A673 (cell line): ENCODE measurements at regions of chr3 and their contacts with region 1.

Region 1: DNA sequence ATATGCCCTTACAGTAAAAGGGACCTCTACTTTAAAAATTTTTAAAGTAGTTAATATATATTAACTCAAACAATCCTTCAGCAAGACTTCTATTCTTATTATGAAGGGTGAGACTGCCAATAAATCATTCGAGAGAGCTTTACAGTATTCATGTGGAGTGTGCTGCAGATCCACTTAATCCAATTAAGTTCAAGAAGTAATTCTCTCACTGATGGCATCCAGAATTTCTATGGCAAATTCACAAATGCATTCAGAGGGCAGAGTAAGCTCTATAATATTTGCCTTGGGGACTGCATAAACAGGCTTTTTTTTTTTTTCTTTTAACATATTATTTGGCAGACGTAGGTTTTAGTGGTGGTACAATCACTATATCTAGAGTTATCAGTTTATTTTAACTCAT is 692.0 kb downstream of the NLGN1 start:
- DNase-seq: peak; percentile 90
- H3K4me3 ChIP-seq: no peak overlapping the region
- H3K27ac ChIP-seq: no peak overlapping the region
- H3K4me1 ChIP-seq: peaks cover 41% of the 10 kb centered on the region
- H3K27me3 ChIP-seq: peaks cover 23% of the 10 kb centered on the region
- CTCF ChIP-seq: no peak

Region 2: GRCh38 chr3:173938159-173938558 is 151.4 kb before region 1 on chr3:
- CTCF ChIA-PET with region 1: no interaction called
- POLR2A ChIA-PET with region 1: no interaction called
- intact Hi-C with region 1: loop called (anchors 5 kb)
- DNase-seq: peak; percentile 12
- H3K4me3 ChIP-seq: no peak overlapping the region
- H3K27ac ChIP-seq: no peak overlapping the region
- H3K4me1 ChIP-seq: peaks cover 24% of the 10 kb centered on the region
- H3K27me3 ChIP-seq: no peaks in the 10 kb centered on the region
- CTCF ChIP-seq: no peak